ENCODE measurements at regions of chr14 and their contacts with region 1.

Region 1: DNA sequence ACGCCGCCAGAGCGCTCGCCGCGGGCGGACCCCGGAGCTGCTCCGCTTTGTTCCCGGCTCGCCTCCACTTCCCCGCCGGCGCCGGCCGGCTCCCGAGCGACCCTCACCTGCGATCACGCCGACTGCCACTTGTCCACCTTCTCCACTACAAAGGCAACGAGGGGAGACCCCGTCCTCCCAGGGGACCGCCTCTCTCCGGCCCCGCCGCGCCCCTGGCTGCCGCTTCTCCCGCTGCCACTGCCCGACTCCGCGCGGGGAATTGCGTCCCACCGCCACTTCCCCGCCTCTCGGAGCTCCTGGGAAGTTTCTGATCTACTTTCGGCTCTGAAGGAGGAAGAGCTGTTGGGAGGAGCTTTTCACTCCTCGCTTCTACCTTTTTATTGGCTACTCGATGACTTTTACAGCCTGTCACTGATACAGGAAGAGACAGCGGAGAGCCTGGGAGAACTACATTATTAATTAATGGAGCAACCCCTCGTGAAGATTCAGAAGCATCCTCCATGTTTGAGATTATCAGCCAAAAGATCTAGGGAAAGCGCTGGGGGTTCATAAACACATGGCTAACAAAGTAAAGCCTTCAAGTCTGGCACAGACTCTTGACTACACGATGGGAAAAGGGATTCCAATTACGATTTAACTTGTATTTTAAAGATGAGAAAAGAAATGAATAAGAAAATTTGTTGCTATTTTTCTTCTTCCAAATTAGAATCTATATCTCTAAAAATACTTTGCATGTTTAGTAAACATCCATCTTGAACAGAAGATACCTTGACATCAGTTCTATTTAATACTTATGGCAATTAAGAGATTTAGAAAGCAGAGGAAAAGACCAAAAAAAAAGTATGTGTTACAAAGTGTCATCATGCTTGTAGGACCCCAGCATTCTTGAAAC is at the start of gene BAZ1A:
- DNase-seq: peak; percentile 41 to 74
- ATAC-seq: peak in 1 of 3 donors; percentile 7
- H3K4me3 ChIP-seq: peak within 1 kb of the TSS; percentile 93
- H3K4me3 Mint-ChIP-seq: peak within 1 kb of the TSS; percentile 99
- H3K27ac ChIP-seq: peak within 1 kb of the TSS; percentile 98
- H3K27ac Mint-ChIP-seq: peak within 1 kb of the TSS; percentile 97 to 99
- H3K4me1 ChIP-seq: peaks cover 8% of the 10 kb centered on the region
- H3K4me1 Mint-ChIP-seq: peaks cover 31 to 34% of the 10 kb centered on the region in 2 donors
- H3K27me3 ChIP-seq: no peaks in the 10 kb centered on the region
- H3K27me3 Mint-ChIP-seq: no peaks in the 10 kb centered on the region
- CTCF ChIP-seq: no peak
- total RNA-seq, gene BAZ1A: 54.6 to 89.5 (median 64.6) TPM

Region 2: DNA sequence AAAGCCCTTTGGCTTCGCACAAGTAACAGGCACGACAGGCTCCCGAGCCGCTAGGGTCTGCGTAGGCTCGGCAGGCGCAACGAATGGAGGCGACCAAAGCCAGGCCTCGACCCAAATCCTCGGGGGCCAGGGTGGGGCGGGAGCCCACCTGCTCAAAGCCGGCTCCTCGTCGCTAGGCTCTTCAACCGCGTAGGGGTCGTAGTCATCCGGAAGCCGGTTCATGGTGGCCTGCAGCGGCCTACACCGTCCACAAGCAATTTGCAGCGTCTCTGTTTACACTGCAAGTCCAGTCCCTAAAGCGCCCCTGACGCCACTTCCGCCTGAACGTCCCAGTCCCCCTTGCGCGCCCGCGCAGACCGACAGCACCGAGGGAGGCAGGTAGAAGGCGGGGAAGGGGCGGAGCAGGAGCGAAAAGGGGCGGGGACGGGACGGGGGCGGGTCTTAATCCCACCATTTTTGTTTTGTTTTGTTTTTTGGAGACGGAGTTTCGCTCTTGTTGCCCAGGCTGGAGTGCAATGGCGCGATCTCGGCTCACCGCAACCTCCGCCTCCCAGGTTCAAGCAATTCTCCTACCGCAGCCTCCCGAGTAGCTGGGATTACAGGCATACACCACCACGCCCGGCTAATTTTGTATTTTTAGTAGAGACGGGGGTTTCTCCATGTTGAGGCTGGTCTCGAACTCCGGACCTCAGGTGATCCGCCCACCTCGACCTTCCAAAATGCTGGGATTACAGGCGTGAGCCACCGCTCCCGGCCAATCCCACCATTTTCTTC is 335.7 kb before region 1 on chr14 and contains the start of gene EAPP:
- intact Hi-C with region 1: loop called (anchors 10 kb)
- DNase-seq: peak; percentile 92 to 97
- ATAC-seq: peak; percentile 98 to 100 (median 99)
- H3K4me3 ChIP-seq: peak within 1 kb of the TSS; percentile 87
- H3K4me3 Mint-ChIP-seq: peak within 1 kb of the TSS; percentile 99
- H3K27ac ChIP-seq: peak within 1 kb of the TSS; percentile 94
- H3K27ac Mint-ChIP-seq: peak within 1 kb of the TSS; percentile 98 to 100
- H3K4me1 ChIP-seq: peaks cover 18% of the 10 kb centered on the region
- H3K4me1 Mint-ChIP-seq: peaks cover 18 to 20% of the 10 kb centered on the region in 2 donors
- H3K27me3 ChIP-seq: no peaks in the 10 kb centered on the region
- H3K27me3 Mint-ChIP-seq: no peaks in the 10 kb centered on the region
- CTCF ChIP-seq: no peak
- total RNA-seq, gene EAPP: 70.5 to 96.6 (median 76.1) TPM

Region 3: DNA sequence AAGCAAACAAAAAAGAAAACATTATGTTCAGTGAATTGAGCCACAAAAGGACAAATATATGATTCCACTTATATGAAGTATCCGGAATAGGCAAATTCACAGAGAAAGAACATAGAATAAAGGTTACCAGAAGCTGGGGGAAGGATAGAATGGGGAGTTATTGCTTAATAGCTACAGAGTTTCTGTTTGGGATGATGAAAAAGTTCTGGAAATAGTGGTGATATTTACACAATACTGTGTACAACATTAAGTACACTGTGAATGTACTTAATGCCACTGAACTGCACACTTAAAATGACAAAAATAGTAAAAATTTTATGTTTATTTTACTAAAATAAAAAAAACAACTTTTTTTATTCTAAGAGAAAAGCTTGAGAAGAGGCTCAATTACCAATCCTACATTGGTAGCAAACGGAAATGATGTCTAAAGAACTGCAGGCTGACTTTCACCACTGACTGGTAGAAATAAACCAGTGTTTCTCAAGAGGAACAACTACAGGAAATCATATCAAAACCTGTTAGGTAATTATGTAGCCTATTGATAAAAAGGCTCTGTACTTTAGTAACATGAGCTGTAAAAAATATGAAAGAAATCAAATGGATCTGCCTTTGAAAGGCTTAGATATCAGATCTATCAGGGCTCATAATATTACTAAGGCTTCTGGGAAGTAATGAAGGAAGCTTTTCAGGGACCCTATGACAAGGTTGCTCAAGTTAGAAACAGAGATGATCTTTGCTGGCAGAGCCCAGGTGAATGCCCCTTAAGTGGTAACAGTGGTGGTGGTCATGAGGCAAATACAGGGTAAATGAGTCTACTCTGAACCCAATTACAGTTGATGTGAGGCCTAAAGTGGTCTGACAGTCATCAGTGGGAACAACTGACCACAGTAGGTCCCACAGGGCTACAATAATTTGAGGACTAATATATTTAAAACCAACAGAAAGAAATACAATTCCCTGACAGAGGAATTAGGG is 41.4 kb before region 1 on chr14:
- intact Hi-C with region 1: loop called (anchors 1 kb)
- DNase-seq: peak in 1 of 2 donors; percentile 47
- ATAC-seq: peak; percentile 82 to 87 (median 86)
- H3K4me3 ChIP-seq: no peak overlapping the region
- H3K4me3 Mint-ChIP-seq: peak overlapping the region; percentile 67
- H3K27ac ChIP-seq: peak overlapping the region; percentile 80
- H3K27ac Mint-ChIP-seq: peak overlapping the region; percentile 95 to 98
- H3K4me1 ChIP-seq: peaks cover 14% of the 10 kb centered on the region
- H3K4me1 Mint-ChIP-seq: peaks cover 47 to 50% of the 10 kb centered on the region in 2 donors
- H3K27me3 ChIP-seq: no peaks in the 10 kb centered on the region
- H3K27me3 Mint-ChIP-seq: no peaks in the 10 kb centered on the region
- CTCF ChIP-seq: no peak

Region 4: DNA sequence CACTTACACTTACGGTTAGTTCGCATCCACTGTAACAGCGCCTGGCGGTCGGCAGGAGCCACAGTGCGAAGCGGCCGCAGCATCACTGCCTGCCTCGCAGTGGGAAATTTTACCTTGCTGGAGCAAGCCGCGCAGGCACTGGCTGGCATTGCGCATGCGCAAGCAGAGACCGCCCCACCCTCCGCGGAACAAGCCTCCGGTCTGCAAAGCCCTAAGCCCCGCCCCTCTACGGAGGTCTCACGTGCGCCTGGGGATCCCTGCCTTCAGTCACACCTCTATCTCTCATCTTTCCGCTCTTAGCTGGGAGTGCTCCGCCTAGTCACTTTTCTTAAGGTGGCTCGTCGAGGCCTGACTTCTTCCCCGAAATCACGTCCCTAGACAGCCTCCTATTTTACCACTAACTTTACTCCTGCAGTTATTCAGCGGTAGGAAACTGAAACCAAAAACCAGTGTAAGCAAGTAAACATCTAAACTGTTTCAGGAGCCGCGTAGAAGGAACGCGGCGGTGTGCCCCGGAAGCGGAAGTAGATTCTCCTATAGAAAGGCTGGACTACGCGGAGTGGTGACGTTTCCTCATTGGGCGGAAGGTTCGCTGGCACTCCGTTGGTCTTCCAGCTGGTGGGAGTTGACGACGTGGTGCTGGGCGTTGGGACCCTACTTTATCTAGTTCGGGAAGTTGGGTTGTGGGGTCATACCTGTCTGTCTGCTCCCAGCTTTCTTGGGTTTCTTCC is 107.3 kb after region 1 on chr14 and contains the start of gene SRP54:
- intact Hi-C with region 1: loop called (anchors 1 kb)
- DNase-seq: peak; percentile 99 to 100
- ATAC-seq: peak; percentile 89 to 98 (median 89)
- H3K4me3 ChIP-seq: peak within 1 kb of the TSS; percentile 74
- H3K4me3 Mint-ChIP-seq: no peak within 1 kb of the TSS
- H3K27ac ChIP-seq: peak within 1 kb of the TSS; percentile 94
- H3K27ac Mint-ChIP-seq: no peak within 1 kb of the TSS
- H3K4me1 ChIP-seq: peaks cover 20% of the 10 kb centered on the region
- H3K4me1 Mint-ChIP-seq: peaks cover 0 to 6% of the 10 kb centered on the region in 2 donors
- H3K27me3 ChIP-seq: no peaks in the 10 kb centered on the region
- H3K27me3 Mint-ChIP-seq: no peaks in the 10 kb centered on the region
- CTCF ChIP-seq: no peak
- total RNA-seq, gene SRP54: 41.2 to 63.2 (median 48.8) TPM

Region 5: GRCh38 chr14:35121887-35122695 is 246.8 kb after region 1 on chr14 and contains the starts of genes PPP2R3C and PRORP:
- intact Hi-C with region 1: loop called (anchors 10 kb)
- DNase-seq: peak; percentile 81 to 96
- ATAC-seq: peak; percentile 83 to 94 (median 85)
- H3K4me3 ChIP-seq: peak within 1 kb of the TSS; percentile 72
- H3K4me3 Mint-ChIP-seq: peak within 1 kb of the TSS; percentile 97
- H3K27ac ChIP-seq: peak within 1 kb of the TSS; percentile 96
- H3K27ac Mint-ChIP-seq: peak within 1 kb of the TSS; percentile 99
- H3K4me1 ChIP-seq: peaks cover 33% of the 10 kb centered on the region
- H3K4me1 Mint-ChIP-seq: peaks cover 56 to 60% of the 10 kb centered on the region in 2 donors
- H3K27me3 ChIP-seq: no peaks in the 10 kb centered on the region
- H3K27me3 Mint-ChIP-seq: no peaks in the 10 kb centered on the region
- CTCF ChIP-seq: no peak
- total RNA-seq, gene PPP2R3C: 41.5 to 49.7 (median 48.3) TPM
- total RNA-seq, gene PRORP: 18.3 to 35.8 (median 20.5) TPM

Region 6: DNA sequence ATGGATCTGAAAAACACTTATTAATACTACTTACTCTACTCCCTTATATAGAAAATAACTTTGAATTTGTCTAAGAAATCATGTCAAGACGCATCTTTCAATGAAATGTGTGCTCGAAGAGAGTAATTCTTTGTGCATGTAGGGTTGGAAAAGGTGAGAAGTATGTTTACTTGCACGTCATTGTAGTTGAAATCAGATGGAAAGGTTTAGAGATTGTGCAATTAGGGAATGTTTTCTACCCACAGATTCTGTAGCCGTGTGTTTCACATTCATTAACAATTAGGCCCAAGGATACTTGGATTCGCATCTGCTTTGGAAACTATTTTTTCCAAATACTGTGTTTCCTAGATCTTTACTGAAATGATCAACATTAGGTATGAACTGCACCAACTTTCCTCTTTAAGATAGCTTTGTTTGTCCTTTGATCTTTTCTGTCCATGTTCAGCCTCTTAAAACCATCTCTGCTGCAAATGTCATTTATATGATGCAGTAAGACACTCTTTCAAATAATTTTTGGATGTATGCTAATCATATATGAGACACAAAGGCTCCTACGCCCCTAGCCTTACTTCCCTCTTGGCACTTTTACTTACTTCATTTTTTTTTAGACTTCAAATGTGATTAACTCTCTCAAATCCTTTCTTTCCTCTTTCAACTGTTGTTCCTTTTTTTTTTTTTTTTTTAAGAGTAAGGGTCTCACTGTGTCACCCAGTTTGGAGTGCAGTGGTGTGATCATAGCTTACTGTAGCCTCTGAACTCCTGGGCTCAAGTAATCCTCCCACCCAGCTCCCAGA is 358.9 kb after region 1 on chr14:
- intact Hi-C with region 1: no loop called
- DNase-seq: no peak
- ATAC-seq: no peak
- H3K4me3 ChIP-seq: no peak overlapping the region
- H3K4me3 Mint-ChIP-seq: no peak overlapping the region
- H3K27ac ChIP-seq: no peak overlapping the region
- H3K27ac Mint-ChIP-seq: no peak overlapping the region
- H3K4me1 ChIP-seq: peaks cover 8% of the 10 kb centered on the region
- H3K4me1 Mint-ChIP-seq: peaks cover 21 to 24% of the 10 kb centered on the region in 2 donors
- H3K27me3 ChIP-seq: no peaks in the 10 kb centered on the region
- H3K27me3 Mint-ChIP-seq: no peaks in the 10 kb centered on the region
- CTCF ChIP-seq: no peak

Measured in natural killer cell (primary cell).